Right cardiac atrium (tissue), 5 donors: ENCODE measurements at regions of chr10 and their contacts with region 1.

Region 1: DNA sequence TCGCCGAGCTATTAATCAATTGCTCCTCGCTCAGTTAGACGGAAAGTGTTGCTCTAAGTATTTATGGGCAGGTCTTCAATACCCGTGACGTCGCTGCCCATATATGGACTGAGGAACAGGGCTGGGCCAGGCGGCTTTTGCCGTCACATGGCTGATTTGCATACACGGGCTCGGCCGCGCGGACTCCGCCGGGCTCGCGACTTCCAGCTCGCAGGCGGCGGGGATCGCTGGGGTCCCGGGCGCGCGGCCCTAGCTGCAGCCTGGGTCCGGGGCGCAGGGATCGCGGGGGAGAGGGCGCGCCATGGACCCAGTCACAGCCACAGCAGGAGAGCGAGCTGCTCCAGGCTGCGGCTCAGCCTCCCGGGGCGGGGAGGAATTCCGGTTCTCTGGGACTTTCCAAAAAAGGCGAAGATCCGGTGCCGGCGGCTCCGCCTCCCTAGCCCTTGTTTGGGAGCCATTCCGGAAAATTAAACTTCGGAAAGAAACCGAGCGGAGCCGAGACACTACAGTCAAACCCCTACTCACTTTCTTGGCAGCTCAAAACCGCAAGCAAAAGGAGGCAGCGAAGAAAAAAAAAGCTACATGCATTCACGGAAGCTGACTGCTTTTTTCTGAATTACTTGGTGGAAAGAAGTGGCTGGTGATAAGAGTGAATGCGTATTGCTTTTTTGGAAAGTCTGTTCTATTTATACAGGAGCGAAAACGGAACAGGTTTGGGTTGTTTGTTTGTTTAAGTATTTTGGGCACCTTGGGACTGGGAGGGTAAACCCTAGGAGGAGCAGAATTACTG is at the start of gene EGR2:
- DNase-seq: peak; percentile 92 to 97 (median 96)
- ATAC-seq: peak; percentile 91 to 95
- H3K4me3 ChIP-seq: peak within 1 kb of the TSS; percentile 96
- H3K27ac ChIP-seq: peak within 1 kb of the TSS; percentile 71
- H3K4me1 ChIP-seq: peaks cover 1% of the 10 kb centered on the region
- H3K27me3 ChIP-seq: no peaks in the 10 kb centered on the region
- total RNA-seq, gene EGR2: 0.54 to 4.7 (median 1.6) TPM

Region 2: GRCh38 chr10:62610649-62611229 is 205.8 kb before region 1 on chr10:
- intact Hi-C with region 1: loop called (anchors 5 to 10 kb)
- DNase-seq: peak; percentile 26 to 75 (median 75)
- ATAC-seq: peak; percentile 61 to 69
- H3K4me3 ChIP-seq: no peak overlapping the region
- H3K27ac ChIP-seq: no peak overlapping the region
- H3K4me1 ChIP-seq: no peaks in the 10 kb centered on the region
- H3K27me3 ChIP-seq: no peaks in the 10 kb centered on the region

Region 3: DNA sequence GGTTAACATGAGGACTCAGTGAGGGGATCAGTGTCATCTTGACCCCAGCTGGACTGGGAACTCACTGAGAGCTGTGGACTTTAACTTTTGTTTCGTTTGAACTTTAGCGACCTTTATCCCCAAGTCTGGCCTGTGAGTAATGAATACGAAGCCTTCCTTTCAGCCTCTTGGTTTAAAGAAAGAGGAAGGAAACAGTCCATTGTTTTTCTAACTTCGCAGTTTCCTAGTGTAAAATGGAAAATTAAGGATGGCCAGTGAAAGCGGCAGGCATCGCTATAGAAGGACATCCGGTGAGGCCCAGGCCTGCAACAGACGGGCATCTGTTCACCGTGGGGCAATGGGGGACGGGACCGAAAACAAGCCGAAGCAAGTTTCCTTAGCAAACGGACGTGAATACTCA is 56.1 kb before region 1 on chr10:
- intact Hi-C with region 1: loop called in 1 of 4 experiments (anchors 5 kb)
- DNase-seq: peak; percentile 36 to 54 (median 48)
- ATAC-seq: peak; percentile 53 to 79
- H3K4me3 ChIP-seq: no peak overlapping the region
- H3K27ac ChIP-seq: peak overlapping the region; percentile 67
- H3K4me1 ChIP-seq: peaks cover 10% of the 10 kb centered on the region
- H3K27me3 ChIP-seq: no peaks in the 10 kb centered on the region

Region 4: DNA sequence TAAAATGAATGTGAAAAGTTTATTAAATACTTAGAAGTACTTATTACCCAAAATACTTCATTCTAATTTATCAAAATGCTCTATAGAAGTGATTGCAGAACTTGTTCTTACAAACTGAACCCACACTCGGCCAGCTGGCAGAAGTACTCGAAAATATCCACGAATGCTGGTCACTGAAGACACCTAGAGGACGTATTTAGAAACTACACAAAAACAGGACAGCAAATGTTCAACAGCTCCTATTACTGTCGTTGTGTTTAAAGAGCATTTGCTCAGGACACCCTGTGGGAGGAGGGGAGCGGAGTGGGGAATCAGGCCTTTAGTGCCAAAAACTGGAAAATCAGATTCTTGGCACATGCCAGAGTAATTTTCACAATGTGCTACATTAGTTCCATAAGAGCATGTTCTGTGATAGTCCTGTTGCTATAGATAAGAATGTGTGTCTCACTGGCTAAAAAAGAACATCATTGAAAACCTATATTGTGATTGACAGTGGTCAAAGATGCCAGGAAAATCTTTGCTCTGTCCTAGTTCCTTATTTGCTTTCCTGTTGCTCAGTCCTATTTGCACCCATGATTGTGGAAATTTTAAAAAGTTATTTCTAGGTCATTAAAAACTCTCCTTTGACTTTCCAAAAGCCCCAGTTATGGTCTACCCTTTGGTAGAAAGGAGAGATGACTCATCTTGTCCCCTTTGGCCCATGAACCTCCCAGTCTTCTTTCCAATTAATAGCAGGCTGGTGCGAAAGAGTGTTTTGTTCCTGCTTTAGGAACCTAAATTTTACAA is 267.6 kb after region 1 on chr10:
- intact Hi-C with region 1: loop called in 1 of 4 experiments (anchors 10 kb)
- DNase-seq: peak; percentile 69 to 80 (median 72)
- ATAC-seq: peak; percentile 85 to 86
- H3K4me3 ChIP-seq: no peak overlapping the region
- H3K27ac ChIP-seq: no peak overlapping the region
- H3K4me1 ChIP-seq: no peaks in the 10 kb centered on the region
- H3K27me3 ChIP-seq: peaks cover 2% of the 10 kb centered on the region